Heart left ventricle (tissue), 16 donors: ENCODE measurements at regions of chr14 and their contacts with region 1.

Region 1: DNA sequence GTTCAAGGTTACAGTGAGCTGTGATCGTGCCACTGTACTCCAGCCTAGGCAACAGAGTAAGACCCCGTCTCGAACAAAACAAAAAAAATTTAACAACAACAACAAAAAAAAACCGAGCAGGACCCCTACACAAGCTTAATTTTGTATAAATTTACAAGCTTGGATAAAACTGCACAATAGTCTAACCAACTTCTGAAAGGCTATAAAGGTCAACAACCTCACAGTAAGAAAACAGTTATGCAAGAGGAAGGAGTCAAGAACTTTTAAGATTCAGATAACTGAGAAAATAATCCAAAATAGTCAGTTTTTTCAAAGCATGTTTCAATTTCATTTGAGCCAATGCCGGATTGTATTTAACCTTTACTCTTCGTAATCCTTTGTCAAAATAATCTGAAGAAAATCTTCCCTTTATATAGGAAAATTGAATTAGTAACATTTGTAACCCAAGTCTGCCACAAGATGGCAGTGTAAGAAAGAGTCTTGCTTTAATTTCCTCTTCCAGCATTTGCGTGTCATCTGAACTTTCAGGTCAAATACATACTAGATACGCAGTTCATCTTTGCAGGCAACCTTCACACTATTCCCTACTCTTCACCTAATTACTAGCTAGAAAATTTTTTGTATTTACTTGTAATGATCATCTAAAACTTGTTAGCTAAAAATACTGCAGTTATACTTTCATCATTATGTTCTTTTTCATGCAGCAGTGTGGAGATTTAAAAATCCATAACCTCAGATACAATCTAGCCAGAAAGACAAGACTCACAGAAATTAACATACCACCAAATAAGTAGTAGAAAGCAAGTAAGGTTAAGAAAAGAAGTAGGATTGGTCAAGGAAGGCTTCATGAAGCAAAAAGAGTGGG is 5.8 kb downstream of the CCNB1IP1 start:
- DNase-seq: peak in 1 of 5 donors; percentile 33
- ATAC-seq: peak in 2 of 4 donors; percentile 48 to 58
- H3K4me3 ChIP-seq: no peak overlapping the region
- H3K27ac ChIP-seq: peak overlapping the region in 3 of 12 donors; percentile 6 to 51 (median 40)
- H3K4me1 ChIP-seq: peaks cover 0 to 29% (median 13%) of the 10 kb centered on the region in 12 donors
- H3K27me3 ChIP-seq: no peaks in the 10 kb centered on the region
- CTCF ChIP-seq: peak; percentile 67 to 88 (median 80)
- POLR2A ChIP-seq: no peak

Region 2: GRCh38 chr14:20350860-20351259 is 23.6 kb after region 1 on chr14:
- intact Hi-C with region 1: loop called in 1 of 10 experiments (anchors 2 kb)
- DNase-seq: no peak
- ATAC-seq: no peak
- H3K4me3 ChIP-seq: no peak overlapping the region
- H3K27ac ChIP-seq: no peak overlapping the region
- H3K4me1 ChIP-seq: no peaks in the 10 kb centered on the region
- H3K27me3 ChIP-seq: no peaks in the 10 kb centered on the region
- CTCF ChIP-seq: peak in 3 of 12 donors; percentile 7 to 15 (median 12)
- POLR2A ChIP-seq: no peak